A673 (cell line): ENCODE measurements at regions of chr11 and their contacts with region 1.

Region 1: DNA sequence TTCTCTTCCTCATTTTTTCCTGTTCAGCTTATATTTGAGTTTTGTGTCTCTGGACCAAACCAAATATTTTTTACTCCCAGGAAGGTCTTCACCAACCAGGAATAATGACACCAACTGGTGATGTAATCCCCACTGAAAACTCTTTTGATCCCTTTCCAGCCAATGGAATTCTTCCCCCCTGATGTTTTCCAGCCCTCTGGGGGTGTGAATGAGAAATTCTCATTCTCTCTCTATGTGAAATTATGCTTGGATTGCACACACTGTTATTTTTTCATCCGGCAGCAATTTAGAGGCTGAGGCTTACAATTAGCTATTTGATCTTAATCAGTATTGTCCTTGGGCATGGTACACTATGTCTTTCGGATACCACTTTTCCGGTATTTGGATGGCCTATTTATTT is 39.5 kb upstream of the SLC1A2 start:
- DNase-seq: peak; percentile 46
- H3K4me3 ChIP-seq: no peak overlapping the region
- H3K27ac ChIP-seq: no peak overlapping the region
- H3K4me1 ChIP-seq: no peaks in the 10 kb centered on the region
- H3K27me3 ChIP-seq: peaks cover 76% of the 10 kb centered on the region
- CTCF ChIP-seq: no peak

Region 2: GRCh38 chr11:35419184-35419829 is 39.5 kb before region 1 on chr11 and contains the start of gene SLC1A2:
- CTCF ChIA-PET with region 1: no interaction called
- POLR2A ChIA-PET with region 1: no interaction called
- intact Hi-C with region 1: no loop called
- DNase-seq: peak; percentile 50
- H3K4me3 ChIP-seq: peak within 1 kb of the TSS; percentile 30
- H3K27ac ChIP-seq: no peak within 1 kb of the TSS
- H3K4me1 ChIP-seq: peaks cover 14% of the 10 kb centered on the region
- H3K27me3 ChIP-seq: peaks cover 100% of the 10 kb centered on the region
- CTCF ChIP-seq: no peak
- total RNA-seq, gene SLC1A2: 0.11 TPM in 1 of 2 replicates, not detected in the other

Region 3: GRCh38 chr11:35436581-35437250 is 22.1 kb before region 1 on chr11:
- CTCF ChIA-PET with region 1: no interaction called
- POLR2A ChIA-PET with region 1: no interaction called
- intact Hi-C with region 1: loop called (anchors 2 kb)
- DNase-seq: no peak
- H3K4me3 ChIP-seq: no peak overlapping the region
- H3K27ac ChIP-seq: no peak overlapping the region
- H3K4me1 ChIP-seq: no peaks in the 10 kb centered on the region
- H3K27me3 ChIP-seq: peaks cover 86% of the 10 kb centered on the region
- CTCF ChIP-seq: no peak